ENCODE measurements at regions of chr11 and their contacts with region 1.

Region 1: GRCh38 chr11:5380740-5381342 is 2.8 kb upstream of the OR51M1 start:
- DNase-seq: peak; percentile 61
- H3K4me3 ChIP-seq: no peak overlapping the region
- H3K27ac ChIP-seq: no peak overlapping the region
- H3K4me1 ChIP-seq: no peaks in the 10 kb centered on the region
- H3K27me3 ChIP-seq: no peaks in the 10 kb centered on the region
- CTCF ChIP-seq: peak; percentile 70

Region 2: GRCh38 chr11:4626207-4627099 is 754.4 kb before region 1 on chr11:
- CTCF ChIA-PET with region 1: no interaction called
- POLR2A ChIA-PET with region 1: no interaction called
- intact Hi-C with region 1: loop called (anchors 2 kb)
- DNase-seq: peak; percentile 78
- H3K4me3 ChIP-seq: no peak overlapping the region
- H3K27ac ChIP-seq: no peak overlapping the region
- H3K4me1 ChIP-seq: no peaks in the 10 kb centered on the region
- H3K27me3 ChIP-seq: no peaks in the 10 kb centered on the region
- CTCF ChIP-seq: peak; percentile 73

Region 3: GRCh38 chr11:5204787-5205186 is 176.1 kb before region 1 on chr11:
- CTCF ChIA-PET with region 1: no interaction called
- POLR2A ChIA-PET with region 1: no interaction called
- intact Hi-C with region 1: loop called (anchors 5 kb)
- DNase-seq: no peak
- H3K4me3 ChIP-seq: no peak overlapping the region
- H3K27ac ChIP-seq: no peak overlapping the region
- H3K4me1 ChIP-seq: no peaks in the 10 kb centered on the region
- H3K27me3 ChIP-seq: no peaks in the 10 kb centered on the region
- CTCF ChIP-seq: 0 out of 2 replicates have a peak, but pooled peaks have one; percentile 24

Measured in A673 (cell line).